Heart right ventricle (tissue), 16 donors: ENCODE measurements at regions of chr3 and their contacts with region 1.

Region 1: GRCh38 chr3:112013058-112013783 is 14.5 kb downstream of the TAGLN3 start:
- DNase-seq: peak; percentile 46 to 69
- ATAC-seq: peak; percentile 75 to 90 (median 85)
- H3K4me3 ChIP-seq: peak overlapping the region in 2 of 10 donors; percentile 6 to 13
- H3K27ac ChIP-seq: peak overlapping the region; percentile 10 to 82 (median 59)
- H3K4me1 ChIP-seq: peaks cover 0 to 45% (median 27%) of the 10 kb centered on the region in 9 donors
- H3K27me3 ChIP-seq: no peaks in the 10 kb centered on the region
- CTCF ChIP-seq: peak; percentile 46 to 89 (median 75)

Region 2: GRCh38 chr3:111668912-111669488 is 344.2 kb before region 1 on chr3:
- intact Hi-C with region 1: loop called in 2 of 10 experiments (anchors 1 to 2 kb)
- DNase-seq: no peak
- ATAC-seq: peak; percentile 53 to 90 (median 86)
- H3K4me3 ChIP-seq: no peak overlapping the region
- H3K27ac ChIP-seq: peak overlapping the region in 4 of 10 donors; percentile 3 to 20 (median 8)
- H3K4me1 ChIP-seq: peaks cover 0 to 30% (median 3%) of the 10 kb centered on the region in 9 donors
- H3K27me3 ChIP-seq: no peaks in the 10 kb centered on the region
- CTCF ChIP-seq: peak; percentile 51 to 87 (median 75)

Region 3: GRCh38 chr3:111717601-111718000 is 295.6 kb before region 1 on chr3:
- intact Hi-C with region 1: loop called in 2 of 10 experiments (anchors 2 kb)
- DNase-seq: peak; percentile 51 to 77
- ATAC-seq: peak; percentile 82 to 93 (median 90)
- H3K4me3 ChIP-seq: no peak overlapping the region
- H3K27ac ChIP-seq: peak overlapping the region in 6 of 10 donors; percentile 12 to 38 (median 23)
- H3K4me1 ChIP-seq: peaks cover 0 to 41% (median 19%) of the 10 kb centered on the region in 9 donors
- H3K27me3 ChIP-seq: no peaks in the 10 kb centered on the region
- CTCF ChIP-seq: peak; percentile 92 to 97 (median 94)

Region 4: DNA sequence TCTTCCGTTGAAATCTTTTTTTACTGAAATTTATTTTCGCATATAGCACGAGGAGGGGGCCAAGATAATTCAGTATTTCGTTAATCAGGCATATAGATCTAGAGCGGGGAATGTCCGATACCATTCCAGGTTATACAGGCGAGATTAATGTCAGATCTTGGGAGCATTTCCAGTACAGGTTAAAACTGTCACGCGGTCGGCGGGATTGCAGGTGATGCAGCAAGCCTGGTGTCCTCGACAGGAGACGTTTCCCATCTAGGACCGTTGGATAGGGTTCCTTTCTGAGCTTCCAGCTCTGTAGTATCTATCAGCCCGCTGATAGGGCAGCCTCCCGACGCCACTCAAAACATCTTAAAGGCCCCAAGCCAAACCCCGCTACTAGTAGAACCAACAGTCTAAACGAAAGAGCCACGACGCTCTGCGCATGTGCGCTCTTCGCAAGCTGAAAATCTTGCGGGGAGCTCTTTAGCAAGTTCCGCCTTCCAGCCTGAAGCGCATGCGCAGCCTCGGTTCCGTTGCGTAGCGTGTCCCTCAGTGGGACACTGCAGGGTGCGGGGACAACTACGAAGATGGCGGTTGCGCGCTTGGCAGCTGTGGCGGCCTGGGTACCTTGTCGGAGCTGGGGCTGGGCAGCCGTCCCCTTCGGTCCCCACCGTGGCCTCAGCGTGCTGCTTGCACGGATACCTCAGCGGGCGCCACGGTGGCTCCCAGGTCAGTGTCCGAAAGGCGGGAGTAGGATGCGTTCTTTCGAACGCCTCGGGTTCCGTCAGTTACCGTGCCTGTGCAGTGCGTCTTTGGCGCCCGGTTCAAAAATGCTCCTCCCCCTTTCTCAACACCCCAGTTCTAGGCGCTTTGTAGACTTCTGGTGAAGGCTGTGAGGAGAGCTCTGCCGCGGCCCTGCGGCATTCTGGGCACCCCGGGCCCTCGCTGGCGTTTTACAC is 34.5 kb before region 1 on chr3 and contains the start of gene ABHD10:
- intact Hi-C with region 1: loop called in 1 of 10 experiments (anchors 5 kb)
- DNase-seq: peak; percentile 97 to 99
- ATAC-seq: peak; percentile 97 to 99 (median 98)
- H3K4me3 ChIP-seq: peak within 1 kb of the TSS; percentile 56 to 95 (median 81)
- H3K27ac ChIP-seq: peak within 1 kb of the TSS; percentile 32 to 92 (median 86)
- H3K4me1 ChIP-seq: peaks cover 0 to 47% (median 27%) of the 10 kb centered on the region in 9 donors
- H3K27me3 ChIP-seq: no peaks in the 10 kb centered on the region
- CTCF ChIP-seq: no peak
- total RNA-seq, gene ABHD10: 42.5 to 57.8 (median 50.1) TPM

Region 5: GRCh38 chr3:111989061-111989678 is 24.1 kb before region 1 on chr3:
- intact Hi-C with region 1: loop called in 2 of 10 experiments (anchors 1 to 2 kb)
- DNase-seq: no peak
- ATAC-seq: peak in 7 of 8 donors; percentile 58 to 83 (median 75)
- H3K4me3 ChIP-seq: no peak overlapping the region
- H3K27ac ChIP-seq: peak overlapping the region in 1 of 10 donors; percentile 9
- H3K4me1 ChIP-seq: peaks cover 0 to 13% (median 0%) of the 10 kb centered on the region in 9 donors
- H3K27me3 ChIP-seq: no peaks in the 10 kb centered on the region
- CTCF ChIP-seq: peak; percentile 43 to 84 (median 71)